Endothelial cell of umbilical vein (primary cell): ENCODE measurements at regions of chr1 and their contacts with region 1.

Region 1: DNA sequence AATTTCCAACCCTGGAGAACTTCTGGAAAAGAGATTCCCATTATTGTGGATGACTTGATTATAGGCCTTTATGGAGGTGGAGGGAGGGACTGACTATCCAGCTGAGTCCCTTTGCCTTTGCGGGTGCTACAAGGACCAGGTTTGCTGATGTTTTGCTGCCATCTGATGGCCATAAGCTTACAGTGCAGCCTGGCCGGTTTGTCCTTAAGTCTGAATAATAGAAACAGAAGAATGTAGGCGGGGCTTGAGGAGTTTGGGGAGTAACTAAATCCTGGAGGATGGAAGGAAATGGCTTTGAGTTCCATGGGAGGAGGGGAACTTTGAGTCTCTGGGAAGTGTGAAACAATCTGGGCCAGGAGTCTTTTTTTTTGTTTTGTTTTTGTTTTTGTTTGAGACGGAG is 55.7 kb upstream of the CD1D start:
- DNase-seq: peak; percentile 93
- H3K4me3 ChIP-seq: no peak overlapping the region
- H3K27ac ChIP-seq: no peak overlapping the region
- H3K4me1 ChIP-seq: no peaks in the 10 kb centered on the region
- H3K27me3 ChIP-seq: peaks cover 16 to 23% of the 10 kb centered on the region in 2 experiments
- CTCF ChIP-seq: peak; percentile 84 to 89
- POLR2A ChIP-seq: no peak

Region 2: DNA sequence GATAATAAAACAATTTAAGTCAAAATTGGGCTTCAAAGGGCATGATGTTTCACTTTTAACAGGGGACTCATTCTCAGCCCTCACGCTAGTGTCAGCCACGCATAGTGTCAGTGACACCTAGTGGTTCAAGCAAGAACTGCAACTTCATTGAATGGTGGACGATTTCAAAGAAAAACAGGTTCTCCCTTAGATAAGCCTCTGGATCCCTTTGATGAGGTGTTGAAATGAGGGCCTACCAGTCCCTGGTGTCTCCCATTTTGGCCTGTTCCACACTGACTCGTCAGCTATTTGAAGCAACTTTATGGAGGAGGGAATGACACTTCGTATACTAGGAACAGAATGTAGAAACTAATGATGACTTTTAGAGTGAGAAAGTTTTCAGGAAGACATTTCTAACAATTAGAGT is 628.9 kb before region 1 on chr1:
- CTCF ChIA-PET with region 1: interaction called, 7 read pairs
- POLR2A ChIA-PET with region 1: no interaction called
- dilution Hi-C with region 1: no loop called
- intact Hi-C with region 1: loop called (anchors 2 kb)
- DNase-seq: peak; percentile 51
- H3K4me3 ChIP-seq: no peak overlapping the region
- H3K27ac ChIP-seq: no peak overlapping the region
- H3K4me1 ChIP-seq: no peaks in the 10 kb centered on the region
- H3K27me3 ChIP-seq: peaks cover 3 to 8% of the 10 kb centered on the region in 2 experiments
- CTCF ChIP-seq: peak; percentile 71 to 73
- POLR2A ChIP-seq: no peak

Region 3: GRCh38 chr1:157878059-157878458 is 246.9 kb before region 1 on chr1:
- CTCF ChIA-PET with region 1: interaction called, 79 read pairs
- POLR2A ChIA-PET with region 1: no interaction called
- dilution Hi-C with region 1: no loop called
- intact Hi-C with region 1: loop called (anchors 1 kb)
- DNase-seq: peak; percentile 29
- H3K4me3 ChIP-seq: no peak overlapping the region
- H3K27ac ChIP-seq: no peak overlapping the region
- H3K4me1 ChIP-seq: no peaks in the 10 kb centered on the region
- H3K27me3 ChIP-seq: peaks cover 0 to 2% of the 10 kb centered on the region in 2 experiments
- CTCF ChIP-seq: peak in 1 of 2 donors; percentile 28
- POLR2A ChIP-seq: no peak

Region 4: DNA sequence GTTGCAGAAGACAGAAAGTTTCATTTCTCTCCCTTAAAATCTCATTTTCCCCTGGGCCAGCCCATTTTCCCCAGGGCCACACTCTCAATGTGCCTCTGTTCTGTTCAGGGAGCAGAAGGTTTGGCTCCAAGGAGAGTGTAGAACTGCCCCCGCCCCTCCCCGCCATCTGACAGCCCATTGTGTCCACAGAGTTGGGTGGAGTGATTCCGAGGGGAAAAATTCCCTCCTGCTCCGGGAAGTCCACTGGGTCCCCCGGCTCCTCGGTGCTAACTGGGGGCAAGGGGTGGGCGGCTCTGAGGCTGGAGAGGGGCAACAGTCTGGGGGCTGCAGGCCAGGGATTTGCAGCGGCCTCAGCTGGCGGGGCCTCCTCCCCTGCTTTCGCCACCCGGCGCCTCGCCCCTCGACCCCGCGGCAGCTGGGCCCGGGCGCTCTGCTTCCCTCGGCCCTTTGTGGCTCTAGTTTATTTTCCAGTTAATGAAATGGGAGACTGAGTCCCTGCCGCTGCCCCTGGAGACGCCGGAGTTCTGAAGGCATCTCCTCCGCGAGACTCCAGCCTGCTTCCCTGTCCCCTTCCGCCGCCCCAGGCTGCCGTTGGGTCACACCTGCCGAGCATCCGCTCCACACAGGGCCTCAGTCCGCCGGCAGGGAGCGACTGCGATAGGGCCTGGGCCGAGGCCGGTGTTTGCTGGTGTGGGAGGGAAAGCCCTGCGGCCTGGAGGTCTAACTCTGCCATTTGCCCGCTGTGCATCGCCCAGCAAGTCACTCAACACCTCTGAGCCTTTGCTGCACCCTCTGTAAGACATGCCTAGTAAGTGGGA is 146.2 kb before region 1 on chr1:
- CTCF ChIA-PET with region 1: interaction called, 12 read pairs
- POLR2A ChIA-PET with region 1: no interaction called
- dilution Hi-C with region 1: no loop called
- intact Hi-C with region 1: no loop called
- DNase-seq: no peak
- H3K4me3 ChIP-seq: peak overlapping the region in 1 of 3 experiments; percentile 7
- H3K27ac ChIP-seq: no peak overlapping the region
- H3K4me1 ChIP-seq: peaks cover 3% of the 10 kb centered on the region
- H3K27me3 ChIP-seq: peaks cover 22 to 25% of the 10 kb centered on the region in 2 experiments
- CTCF ChIP-seq: peak in 1 of 2 donors; percentile 19
- POLR2A ChIP-seq: no peak

Region 5: GRCh38 chr1:158067662-158068061 is 57.3 kb before region 1 on chr1:
- CTCF ChIA-PET with region 1: no interaction called
- POLR2A ChIA-PET with region 1: no interaction called
- dilution Hi-C with region 1: no loop called
- intact Hi-C with region 1: no loop called
- DNase-seq: no peak
- H3K4me3 ChIP-seq: no peak overlapping the region
- H3K27ac ChIP-seq: no peak overlapping the region
- H3K4me1 ChIP-seq: no peaks in the 10 kb centered on the region
- H3K27me3 ChIP-seq: no peaks in the 10 kb centered on the region
- CTCF ChIP-seq: no peak
- POLR2A ChIP-seq: no peak

Region 6: DNA sequence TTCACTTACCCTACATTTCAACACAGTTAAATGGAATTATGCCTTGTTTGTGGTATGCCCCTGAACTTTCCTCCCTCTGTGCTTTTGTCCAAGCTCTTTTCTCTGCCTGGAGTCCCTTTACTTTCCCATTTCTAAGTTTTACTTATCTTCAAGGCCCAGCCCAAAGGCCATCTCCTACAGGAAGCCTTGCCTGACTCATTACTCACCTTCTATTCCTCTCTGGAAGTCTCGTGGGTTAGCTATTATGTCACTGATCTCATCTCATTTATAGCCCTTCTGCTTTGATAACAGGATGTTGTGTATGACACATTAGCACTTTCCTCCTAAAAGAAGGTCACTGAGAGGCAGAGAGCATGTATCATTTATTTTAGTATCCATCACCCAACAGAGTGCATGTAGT is 23.1 kb before region 1 on chr1:
- CTCF ChIA-PET with region 1: interaction called, 18 read pairs
- POLR2A ChIA-PET with region 1: no interaction called
- dilution Hi-C with region 1: no loop called
- intact Hi-C with region 1: no loop called
- DNase-seq: peak; percentile 92
- H3K4me3 ChIP-seq: no peak overlapping the region
- H3K27ac ChIP-seq: peak overlapping the region; percentile 60
- H3K4me1 ChIP-seq: peaks cover 12% of the 10 kb centered on the region
- H3K27me3 ChIP-seq: peaks cover 26 to 30% of the 10 kb centered on the region in 2 experiments
- CTCF ChIP-seq: no peak
- POLR2A ChIP-seq: peak; percentile 35

Region 7: DNA sequence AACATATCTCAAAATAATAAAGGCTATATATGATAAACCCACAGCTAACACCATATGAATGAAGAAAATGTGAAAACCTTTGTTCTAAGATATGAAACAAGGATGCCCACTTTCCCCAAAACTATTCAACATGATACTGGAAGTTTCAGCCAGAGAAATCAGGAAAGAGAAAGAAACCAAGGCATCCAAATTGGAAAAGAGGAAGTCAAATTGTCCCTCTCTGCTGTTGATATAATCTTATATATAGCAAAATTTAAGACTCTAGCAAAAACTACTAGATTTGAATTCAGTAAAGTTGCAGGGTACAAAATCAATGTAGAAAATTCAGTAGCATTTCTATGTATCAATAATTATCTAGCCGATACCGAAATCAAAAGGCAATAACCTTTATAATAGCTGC is 475.7 kb after region 1 on chr1:
- CTCF ChIA-PET with region 1: no interaction called
- POLR2A ChIA-PET with region 1: no interaction called
- dilution Hi-C with region 1: no loop called
- intact Hi-C with region 1: no loop called
- DNase-seq: no peak
- H3K4me3 ChIP-seq: no peak overlapping the region
- H3K27ac ChIP-seq: no peak overlapping the region
- H3K4me1 ChIP-seq: no peaks in the 10 kb centered on the region
- H3K27me3 ChIP-seq: no peaks in the 10 kb centered on the region
- CTCF ChIP-seq: no peak
- POLR2A ChIP-seq: no peak

Region 8: GRCh38 chr1:158700552-158700951 is 575.6 kb after region 1 on chr1 and contains the start of gene OR6K2:
- CTCF ChIA-PET with region 1: no interaction called
- POLR2A ChIA-PET with region 1: no interaction called
- dilution Hi-C with region 1: no loop called
- intact Hi-C with region 1: no loop called
- DNase-seq: no peak
- H3K4me3 ChIP-seq: no peak within 1 kb of the TSS
- H3K27ac ChIP-seq: no peak within 1 kb of the TSS
- H3K4me1 ChIP-seq: no peaks in the 10 kb centered on the region
- H3K27me3 ChIP-seq: no peaks in the 10 kb centered on the region
- CTCF ChIP-seq: no peak
- POLR2A ChIP-seq: no peak
- total RNA-seq, gene OR6K2: not detected in 2 replicates